ENCODE measurements at regions of chr2 and their contacts with region 1.

Region 1: DNA sequence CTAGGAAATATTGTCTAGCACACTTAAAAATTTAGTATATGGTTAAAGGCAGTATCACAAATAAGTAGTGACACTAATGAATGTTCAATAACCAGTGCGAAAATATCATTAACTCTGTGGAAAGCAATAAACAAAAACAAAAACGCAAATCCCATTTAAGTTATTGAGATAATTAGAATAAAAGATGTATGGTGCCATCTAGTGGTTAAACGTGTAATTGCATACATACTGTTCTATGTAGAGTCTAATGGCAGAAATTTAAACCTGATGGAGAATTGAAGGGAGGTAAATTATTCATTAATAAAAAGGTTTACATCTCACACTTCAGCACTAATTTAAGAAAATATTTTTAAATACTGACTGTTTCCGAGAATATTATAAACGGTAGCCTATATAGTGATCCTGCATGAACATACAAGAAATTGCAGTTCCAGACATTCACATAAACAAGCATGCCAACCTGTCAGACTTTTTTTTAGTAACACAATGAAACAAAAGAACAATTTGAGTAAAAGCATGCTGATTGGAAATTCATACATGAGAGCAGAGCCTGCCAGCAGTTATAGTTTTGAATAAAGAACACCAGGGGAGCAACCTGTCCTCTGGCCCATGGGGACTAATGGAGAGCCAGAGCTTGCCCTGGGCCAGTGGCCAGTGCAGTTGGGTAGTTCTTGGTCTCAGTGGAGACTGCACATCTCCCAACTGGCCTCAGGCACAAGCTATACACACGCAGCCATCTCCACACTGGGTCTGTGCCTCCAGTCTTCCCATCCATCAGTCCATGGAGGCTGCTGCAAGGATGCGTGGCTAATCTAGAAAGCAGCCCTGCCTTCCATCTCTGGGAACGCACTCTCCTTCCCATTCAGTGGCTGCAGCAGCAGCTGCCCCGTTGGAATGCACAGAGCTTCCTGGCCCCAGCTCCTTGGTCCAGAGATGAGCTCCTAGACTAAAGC is 28.0 kb downstream of the GCG start:
- DNase-seq: peak in 7 of 9 donors; percentile 26 to 69 (median 61)
- ATAC-seq: peak; percentile 85
- H3K4me3 ChIP-seq: no peak overlapping the region
- H3K4me3 Mint-ChIP-seq: no peak overlapping the region
- H3K27ac ChIP-seq: no peak overlapping the region
- H3K27ac Mint-ChIP-seq: no peak overlapping the region
- H3K4me1 ChIP-seq: no peaks in the 10 kb centered on the region
- H3K4me1 Mint-ChIP-seq: peaks cover 0 to 24% (median 6%) of the 10 kb centered on the region in 7 donors
- H3K27me3 ChIP-seq: no peaks in the 10 kb centered on the region
- H3K27me3 Mint-ChIP-seq: peaks cover 0 to 7% (median 0%) of the 10 kb centered on the region in 5 donors

Region 2: GRCh38 chr2:161273038-161273760 is 850.9 kb before region 1 on chr2:
- CTCF ChIA-PET with region 1: no interaction called
- POLR2A ChIA-PET with region 1: no interaction called
- intact Hi-C with region 1: loop called in 1 of 2 experiments (anchors 5 kb)
- DNase-seq: peak in 7 of 9 donors; percentile 26 to 65 (median 58)
- ATAC-seq: peak; percentile 80
- H3K4me3 ChIP-seq: no peak overlapping the region
- H3K4me3 Mint-ChIP-seq: no peak overlapping the region
- H3K27ac ChIP-seq: no peak overlapping the region
- H3K27ac Mint-ChIP-seq: no peak overlapping the region
- H3K4me1 ChIP-seq: no peaks in the 10 kb centered on the region
- H3K4me1 Mint-ChIP-seq: peaks cover 0 to 3% (median 0%) of the 10 kb centered on the region in 7 donors
- H3K27me3 ChIP-seq: no peaks in the 10 kb centered on the region
- H3K27me3 Mint-ChIP-seq: peaks cover 4 to 27% (median 5%) of the 10 kb centered on the region in 5 donors

Region 3: DNA sequence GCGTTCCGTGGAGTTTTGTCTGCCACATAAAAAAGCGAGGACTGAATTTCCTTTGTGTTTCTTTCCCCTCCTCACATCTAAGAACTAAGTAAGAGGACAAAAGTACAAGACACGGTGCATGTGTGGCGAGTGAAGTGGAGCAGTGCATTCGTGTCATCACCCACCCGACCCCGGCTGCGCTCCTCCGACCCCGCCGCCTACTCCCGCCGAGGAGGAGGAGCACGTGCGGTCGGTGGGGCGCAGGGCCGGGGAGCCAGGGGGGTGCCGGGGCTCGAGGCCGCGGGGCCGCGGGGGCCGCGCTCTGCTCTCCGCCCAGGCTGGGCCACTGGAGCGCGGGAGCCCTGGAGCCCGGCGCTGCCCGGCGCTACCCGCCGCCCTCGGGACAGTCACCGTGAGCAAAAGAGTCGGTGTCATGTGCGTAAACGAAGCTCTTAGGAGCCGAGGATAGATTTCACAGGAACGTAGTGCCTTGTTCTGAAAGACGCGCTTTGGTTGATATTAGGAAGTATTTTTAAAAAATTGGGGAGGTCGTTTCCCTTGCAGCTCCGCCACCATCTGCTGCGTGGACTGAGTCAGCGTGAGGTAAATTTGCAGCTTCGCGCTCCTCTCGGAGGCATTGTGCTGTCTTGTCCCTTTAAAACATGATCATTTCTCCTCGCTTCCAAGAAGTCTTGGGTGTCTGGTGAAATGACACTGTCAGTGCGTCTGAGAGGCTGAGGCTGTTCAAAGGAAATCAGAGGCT is 697.0 kb before region 1 on chr2:
- CTCF ChIA-PET with region 1: no interaction called
- POLR2A ChIA-PET with region 1: no interaction called
- intact Hi-C with region 1: loop called in 1 of 2 experiments (anchors 5 kb)
- DNase-seq: peak in 1 of 9 donors; percentile 36
- ATAC-seq: peak; percentile 19
- H3K4me3 ChIP-seq: peak overlapping the region; percentile 8
- H3K4me3 Mint-ChIP-seq: peak overlapping the region; percentile 44 to 82 (median 72)
- H3K27ac ChIP-seq: no peak overlapping the region
- H3K27ac Mint-ChIP-seq: peak overlapping the region in 1 of 9 donors; percentile 68
- H3K4me1 ChIP-seq: peaks cover 5 to 21% of the 10 kb centered on the region in 2 donors
- H3K4me1 Mint-ChIP-seq: peaks cover 14 to 44% (median 31%) of the 10 kb centered on the region in 7 donors
- H3K27me3 ChIP-seq: peaks cover 27 to 70% of the 10 kb centered on the region in 2 donors
- H3K27me3 Mint-ChIP-seq: peaks cover 74 to 89% (median 82%) of the 10 kb centered on the region in 5 donors

Region 4: DNA sequence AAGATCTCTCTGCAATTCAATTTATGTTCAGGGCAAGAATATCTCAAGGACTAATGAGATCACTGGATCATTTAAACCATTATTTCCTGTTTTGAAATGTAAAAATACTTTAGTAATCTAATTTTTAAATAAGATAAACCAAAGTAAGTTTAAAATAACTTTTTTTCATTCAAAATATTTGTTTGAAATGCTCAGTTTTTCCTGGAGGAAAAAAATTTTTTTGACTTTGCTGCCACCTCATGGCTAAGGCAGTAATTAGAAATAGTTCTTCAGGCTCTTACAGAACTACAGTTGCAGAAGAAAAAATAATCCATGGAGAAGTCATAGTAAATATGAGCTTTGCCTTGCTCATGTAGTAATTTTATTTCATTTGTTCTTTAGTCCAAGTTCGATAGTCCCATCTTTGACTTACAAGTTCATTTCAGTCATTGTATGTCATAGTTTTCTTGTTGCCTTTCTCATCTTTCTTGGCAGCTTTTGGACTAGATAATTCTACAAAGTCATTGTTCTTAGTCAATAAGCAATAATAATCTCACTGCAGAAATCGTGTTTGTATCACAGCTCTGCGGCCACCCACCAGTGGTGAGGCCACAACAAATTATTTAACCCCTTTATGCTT is 177.5 kb before region 1 on chr2:
- CTCF ChIA-PET with region 1: interaction called, 12 read pairs
- POLR2A ChIA-PET with region 1: no interaction called
- intact Hi-C with region 1: loop called in 1 of 2 experiments (anchors 2 kb)
- DNase-seq: peak in 4 of 9 donors; percentile 18 to 38 (median 28)
- ATAC-seq: no peak
- H3K4me3 ChIP-seq: no peak overlapping the region
- H3K4me3 Mint-ChIP-seq: no peak overlapping the region
- H3K27ac ChIP-seq: no peak overlapping the region
- H3K27ac Mint-ChIP-seq: no peak overlapping the region
- H3K4me1 ChIP-seq: peaks cover 0 to 9% of the 10 kb centered on the region in 2 donors
- H3K4me1 Mint-ChIP-seq: peaks cover 0 to 36% (median 3%) of the 10 kb centered on the region in 7 donors
- H3K27me3 ChIP-seq: no peaks in the 10 kb centered on the region
- H3K27me3 Mint-ChIP-seq: peaks cover 0 to 20% (median 0%) of the 10 kb centered on the region in 5 donors

Region 5: DNA sequence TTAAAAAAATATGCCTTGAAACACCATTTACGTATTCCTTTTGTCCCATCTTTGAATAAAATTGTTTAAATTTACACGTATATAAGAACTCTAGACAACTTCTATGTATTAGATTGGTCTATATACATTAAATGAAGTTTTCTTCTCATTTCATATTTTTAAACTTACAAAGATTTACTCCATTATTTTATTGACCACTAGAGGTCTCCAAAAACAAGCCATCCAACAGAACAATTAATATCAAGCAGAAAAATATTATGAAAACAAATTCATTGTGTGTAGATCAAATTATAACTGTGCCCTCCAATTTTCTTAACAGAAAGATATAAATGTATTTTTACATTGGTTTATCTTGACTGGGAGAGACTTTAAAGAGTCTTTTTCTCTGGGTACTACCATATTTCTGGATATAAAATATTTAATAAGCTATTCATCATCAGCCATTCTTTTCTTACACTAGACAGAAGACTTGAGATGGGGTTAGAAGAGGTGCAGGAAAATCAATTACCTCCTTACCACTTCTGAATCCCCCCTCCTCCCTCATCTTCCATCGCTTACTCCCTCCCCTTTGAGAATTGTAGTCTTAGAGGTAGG is 116.5 kb before region 1 on chr2:
- CTCF ChIA-PET with region 1: interaction called, 10 read pairs
- POLR2A ChIA-PET with region 1: interaction called, 7 read pairs
- intact Hi-C with region 1: loop called (anchors 1 to 5 kb)
- DNase-seq: peak in 5 of 9 donors; percentile 32 to 54 (median 41)
- ATAC-seq: no peak
- H3K4me3 ChIP-seq: no peak overlapping the region
- H3K4me3 Mint-ChIP-seq: no peak overlapping the region
- H3K27ac ChIP-seq: no peak overlapping the region
- H3K27ac Mint-ChIP-seq: peak overlapping the region in 7 of 9 donors; percentile 23 to 86 (median 47)
- H3K4me1 ChIP-seq: peaks cover 18 to 40% of the 10 kb centered on the region in 2 donors
- H3K4me1 Mint-ChIP-seq: peaks cover 18 to 64% (median 52%) of the 10 kb centered on the region in 7 donors
- H3K27me3 ChIP-seq: no peaks in the 10 kb centered on the region
- H3K27me3 Mint-ChIP-seq: no peaks in the 10 kb centered on the region

Region 6: GRCh38 chr2:162058973-162059668 is 65.0 kb before region 1 on chr2:
- CTCF ChIA-PET with region 1: interaction called, 3 read pairs
- POLR2A ChIA-PET with region 1: interaction called, 3 read pairs
- intact Hi-C with region 1: loop called in 1 of 2 experiments (anchors 5 kb)
- DNase-seq: no peak
- ATAC-seq: peak; percentile 33
- H3K4me3 ChIP-seq: peak overlapping the region; percentile 48
- H3K4me3 Mint-ChIP-seq: peak overlapping the region; percentile 64 to 83 (median 76)
- H3K27ac ChIP-seq: peak overlapping the region; percentile 39
- H3K27ac Mint-ChIP-seq: peak overlapping the region; percentile 45 to 91 (median 84)
- H3K4me1 ChIP-seq: peaks cover 35 to 42% of the 10 kb centered on the region in 2 donors
- H3K4me1 Mint-ChIP-seq: peaks cover 32 to 92% (median 88%) of the 10 kb centered on the region in 7 donors
- H3K27me3 ChIP-seq: no peaks in the 10 kb centered on the region
- H3K27me3 Mint-ChIP-seq: no peaks in the 10 kb centered on the region

Measured in naive thymus-derived CD4-positive, alpha-beta T cell (primary cell).